WTC11 (cell line): ENCODE measurements at regions of chr6 and their contacts with region 1.

Region 1: DNA sequence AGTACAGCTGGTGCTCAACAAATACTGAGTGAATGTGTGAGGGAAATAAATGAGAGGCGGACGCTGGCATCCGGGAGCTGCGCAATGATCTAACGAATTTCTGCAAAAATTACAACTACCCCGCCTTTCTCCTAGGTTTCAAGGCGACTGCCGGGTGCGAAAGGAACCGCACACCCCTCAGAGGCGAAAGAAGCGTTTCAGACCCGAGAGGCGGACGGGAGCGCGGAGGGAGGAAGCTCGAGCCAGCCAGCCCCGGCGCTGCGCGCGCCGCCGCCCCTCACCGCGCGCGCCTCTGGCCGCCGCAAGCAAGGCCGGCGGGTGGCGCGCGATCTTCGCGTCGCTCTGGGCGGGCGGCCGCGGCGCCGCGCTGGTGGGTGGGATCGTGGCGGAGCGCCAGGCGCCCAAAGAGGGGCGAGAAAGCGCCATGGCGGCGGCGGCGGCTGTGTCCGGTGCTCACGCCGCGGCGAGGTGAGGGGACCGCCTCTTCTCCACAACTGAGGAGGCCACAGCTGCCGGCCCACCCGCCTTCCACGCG is at the start of gene BLTP3A:
- DNase-seq: peak; percentile 70
- ATAC-seq: peak; percentile 85
- H3K4me3 Mint-ChIP-seq: peak within 1 kb of the TSS; percentile 93
- H3K27ac Mint-ChIP-seq: peak within 1 kb of the TSS; percentile 97
- H3K4me1 Mint-ChIP-seq: peaks cover 21% of the 10 kb centered on the region
- H3K27me3 Mint-ChIP-seq: no peaks in the 10 kb centered on the region
- CTCF ChIP-seq: no peak
- total RNA-seq, gene BLTP3A: 17.2 to 18.7 TPM (median 17.8 TPM) in 3 replicates

Region 2: DNA sequence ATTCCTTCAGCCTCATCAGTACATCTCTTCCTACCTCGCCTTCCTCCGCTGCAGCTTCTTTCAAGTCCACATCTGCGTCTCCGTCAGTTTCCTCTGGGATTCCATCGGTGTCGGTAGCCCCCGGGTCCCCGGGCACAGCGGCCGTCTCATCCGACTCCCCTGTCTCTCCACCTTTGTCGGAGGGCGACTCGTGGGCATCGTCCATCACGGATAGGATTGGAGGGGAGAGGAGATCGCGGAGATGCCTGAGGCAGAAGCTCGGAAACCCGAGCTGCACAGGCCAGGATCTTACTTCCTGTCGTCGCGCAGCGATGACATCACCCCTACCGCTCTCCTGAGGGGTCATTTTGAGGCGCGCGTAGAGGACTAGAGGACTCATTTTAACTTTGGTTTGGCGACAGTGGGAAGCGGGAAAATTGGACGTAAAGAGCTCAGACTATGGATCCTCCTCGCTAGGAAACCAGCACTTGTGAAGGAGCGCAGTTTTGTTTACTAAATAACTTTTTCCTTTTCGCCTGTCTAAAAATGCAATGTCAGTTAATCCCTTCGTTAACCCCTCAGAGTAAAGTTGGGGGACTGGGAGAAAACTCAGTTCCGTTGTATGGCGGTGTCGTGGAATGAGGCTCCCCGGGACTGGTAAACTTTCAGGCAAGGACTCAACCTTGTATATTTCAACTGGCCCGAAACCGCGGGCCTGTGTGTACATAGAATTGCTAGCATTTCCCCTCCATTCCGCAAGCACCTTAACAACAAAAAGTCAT is 96.2 kb after region 1 on chr6 and contains the start of gene TAF11:
- CTCF ChIA-PET with region 1: no interaction called
- POLR2A ChIA-PET with region 1: interaction called, 24 read pairs
- DNase-seq: peak; percentile 92
- ATAC-seq: peak; percentile 75
- H3K4me3 Mint-ChIP-seq: peak within 1 kb of the TSS; percentile 100
- H3K27ac Mint-ChIP-seq: peak within 1 kb of the TSS; percentile 100
- H3K4me1 Mint-ChIP-seq: peaks cover 14% of the 10 kb centered on the region
- H3K27me3 Mint-ChIP-seq: no peaks in the 10 kb centered on the region
- CTCF ChIP-seq: no peak
- total RNA-seq, gene TAF11: 40.8 to 44.1 TPM (median 42.2 TPM) in 3 replicates